ENCODE measurements at regions of chr19 and their contacts with region 1.

Region 1: DNA sequence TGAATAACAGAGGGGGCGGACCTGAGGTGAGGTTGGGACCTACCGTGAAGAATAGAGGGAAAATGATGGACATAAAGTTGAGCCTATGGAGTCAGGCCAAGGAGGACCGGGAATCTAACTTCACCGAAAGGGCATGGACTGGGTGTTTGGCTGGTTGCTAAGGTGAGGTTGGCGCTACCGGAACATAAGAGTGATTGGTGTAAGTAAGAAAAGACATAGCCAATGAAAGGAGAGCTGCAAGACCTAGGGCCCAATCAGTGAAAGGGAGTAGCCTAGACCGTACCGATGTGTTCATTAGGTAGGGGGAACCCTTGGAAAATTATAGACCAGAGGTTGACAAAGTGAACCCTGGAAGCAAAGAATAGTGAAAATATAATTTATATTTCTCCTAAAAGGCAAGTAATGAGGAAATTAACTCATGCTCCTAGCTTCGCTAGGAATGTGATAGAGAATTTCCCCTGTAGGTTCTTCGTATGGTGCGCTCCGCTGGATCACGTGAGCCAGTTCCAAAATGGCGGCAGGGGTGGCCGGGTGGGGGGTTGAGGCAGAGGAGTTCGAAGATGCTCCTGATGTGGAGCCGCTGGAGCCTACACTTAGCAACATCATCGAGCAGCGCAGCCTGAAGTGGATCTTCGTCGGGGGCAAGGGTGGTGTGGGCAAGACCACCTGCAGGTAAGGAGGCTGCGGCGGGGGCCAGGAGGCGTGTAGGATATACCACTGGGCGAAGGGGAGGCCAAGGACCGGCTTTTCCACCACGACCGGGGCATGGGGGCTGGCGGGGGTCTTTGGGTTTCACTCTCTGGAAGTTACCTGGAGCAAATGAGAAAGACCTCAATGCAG is at the start of gene GET3:
- DNase-seq: peak; percentile 89
- ATAC-seq: peak; percentile 84
- H3K4me3 Mint-ChIP-seq: peak within 1 kb of the TSS; percentile 99
- H3K27ac Mint-ChIP-seq: peak within 1 kb of the TSS; percentile 98
- H3K4me1 Mint-ChIP-seq: peaks cover 35% of the 10 kb centered on the region
- H3K27me3 Mint-ChIP-seq: no peaks in the 10 kb centered on the region
- CTCF ChIP-seq: no peak
- total RNA-seq, gene GET3: 50.7 to 52.2 TPM

Region 2: DNA sequence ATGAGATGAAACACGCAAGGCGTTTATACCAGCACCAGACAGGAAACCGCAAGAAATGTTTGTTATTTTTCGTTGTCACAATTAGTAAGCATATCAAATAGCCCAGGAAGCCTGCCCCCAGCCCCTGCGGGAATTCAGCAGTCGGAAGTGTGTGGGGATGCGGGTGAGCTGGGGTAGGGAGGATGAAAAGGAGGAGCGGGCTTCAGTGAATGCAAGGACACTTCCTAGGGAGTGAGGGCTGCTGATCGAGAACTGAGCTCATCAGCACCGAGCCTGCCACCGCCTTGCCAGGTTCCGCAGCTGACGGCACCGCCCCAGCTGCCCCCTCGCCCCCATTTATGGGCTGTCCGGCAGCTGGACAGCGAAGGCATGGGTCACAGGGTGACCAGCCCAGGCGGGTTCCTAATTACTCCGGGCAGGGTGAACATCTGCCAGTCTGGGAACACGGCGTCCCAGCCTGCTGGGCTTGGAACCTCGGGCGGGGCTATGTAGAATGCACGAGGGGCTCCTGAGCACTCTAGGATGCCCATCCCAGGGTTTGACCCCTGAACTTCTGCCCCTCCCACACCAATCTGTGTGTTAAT is 12.8 kb after region 1 on chr19:
- CTCF ChIA-PET with region 1: interaction called, 9 read pairs
- POLR2A ChIA-PET with region 1: interaction called, 10 read pairs
- intact Hi-C with region 1: no loop called
- DNase-seq: no peak
- ATAC-seq: no peak
- H3K4me3 Mint-ChIP-seq: no peak overlapping the region
- H3K27ac Mint-ChIP-seq: no peak overlapping the region
- H3K4me1 Mint-ChIP-seq: no peaks in the 10 kb centered on the region
- H3K27me3 Mint-ChIP-seq: peaks cover 24% of the 10 kb centered on the region
- CTCF ChIP-seq: no peak

Measured in activated CD8-positive, alpha-beta T cell treated with anti-CD3 and anti-CD28 coated beads for 36 hours (primary cell).